ENCODE measurements at regions of chr2 and their contacts with region 1.

Region 1: DNA sequence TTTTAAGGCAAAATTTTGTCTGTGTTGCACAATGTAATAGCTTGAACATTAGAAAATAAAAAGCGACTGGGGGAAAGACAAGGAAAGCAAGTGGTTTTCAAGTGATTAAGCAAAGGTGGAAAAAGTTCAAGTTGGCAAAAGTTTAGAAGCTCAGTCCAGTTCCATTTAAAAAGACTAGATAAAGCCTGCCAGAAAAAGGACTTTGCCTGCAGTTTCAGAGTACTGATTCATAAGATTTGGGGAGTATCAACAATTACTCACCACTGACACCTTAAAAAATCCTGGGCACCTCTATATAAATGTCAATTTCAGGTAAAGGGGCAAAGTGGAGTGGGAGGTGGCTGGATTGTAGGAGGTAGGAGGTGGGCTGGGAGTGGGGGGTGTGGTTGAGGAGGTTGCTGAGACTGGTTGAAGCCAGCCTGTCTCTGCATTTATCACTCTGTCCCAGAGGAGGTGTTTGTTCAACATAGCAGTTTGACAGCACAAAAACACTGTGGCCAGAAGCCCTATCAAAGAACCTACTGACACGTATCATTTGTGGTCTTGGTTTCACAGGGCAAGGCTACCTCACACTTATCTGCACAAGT is 14.6 kb downstream of the ZEB2 start:
- DNase-seq: no peak

Region 2: DNA sequence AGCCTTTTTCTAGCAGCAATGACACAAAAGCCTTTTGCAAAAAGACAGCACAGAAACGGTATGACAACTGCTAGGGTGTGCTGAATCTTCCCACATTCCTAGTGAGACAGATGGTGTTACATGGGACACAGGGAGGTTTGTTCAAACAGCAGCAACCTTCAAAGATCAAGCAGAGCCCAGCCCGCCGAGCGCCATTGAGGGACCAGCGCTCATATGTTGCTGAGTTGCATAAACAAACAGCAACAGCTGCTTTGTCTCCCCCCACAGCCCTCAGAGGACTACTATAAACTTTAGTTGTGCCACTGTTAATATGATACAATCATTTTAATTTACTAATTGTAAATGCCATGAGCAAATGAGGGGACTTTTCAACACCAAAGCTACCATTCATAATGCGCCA is 103.1 kb before region 1 on chr2:
- intact Hi-C with region 1: loop called (anchors 5 kb)
- DNase-seq: no peak

Region 3: DNA sequence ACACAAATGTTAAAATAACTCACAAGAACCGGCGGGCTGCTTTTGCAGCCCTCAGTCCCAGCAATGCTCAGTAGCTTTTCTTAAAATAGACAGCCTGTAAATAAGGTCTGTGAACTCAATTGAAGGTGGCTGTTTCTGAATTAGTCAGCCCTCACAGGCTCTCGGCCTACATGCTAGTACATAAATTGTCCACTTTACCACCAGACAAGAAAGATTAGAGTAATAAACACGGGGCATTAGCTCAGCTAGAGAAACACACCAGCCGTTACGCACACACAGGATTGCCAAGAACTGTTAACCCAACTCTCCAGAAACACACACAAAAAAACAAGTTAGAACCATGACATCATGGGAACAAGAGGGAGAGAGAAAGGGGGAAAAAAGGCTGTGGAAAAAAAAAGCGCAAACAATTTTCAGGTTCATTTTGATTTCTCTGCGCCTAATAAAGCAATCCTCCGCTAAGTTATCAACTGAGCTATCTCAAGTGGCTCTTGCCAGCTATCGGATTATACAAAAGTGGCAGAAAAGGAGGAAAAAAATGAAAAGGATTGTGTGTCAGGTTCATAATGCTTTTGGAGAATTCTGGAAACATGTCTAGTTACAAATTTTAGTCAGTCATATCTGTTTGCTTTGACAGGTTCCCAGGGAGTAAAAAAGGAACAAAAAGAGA is 74.5 kb before region 1 on chr2:
- intact Hi-C with region 1: loop called (anchors 2 kb)
- DNase-seq: no peak

Region 4: GRCh38 chr2:144452169-144452988 is 53.0 kb before region 1 on chr2:
- intact Hi-C with region 1: loop called (anchors 2 kb)
- DNase-seq: no peak

Region 5: DNA sequence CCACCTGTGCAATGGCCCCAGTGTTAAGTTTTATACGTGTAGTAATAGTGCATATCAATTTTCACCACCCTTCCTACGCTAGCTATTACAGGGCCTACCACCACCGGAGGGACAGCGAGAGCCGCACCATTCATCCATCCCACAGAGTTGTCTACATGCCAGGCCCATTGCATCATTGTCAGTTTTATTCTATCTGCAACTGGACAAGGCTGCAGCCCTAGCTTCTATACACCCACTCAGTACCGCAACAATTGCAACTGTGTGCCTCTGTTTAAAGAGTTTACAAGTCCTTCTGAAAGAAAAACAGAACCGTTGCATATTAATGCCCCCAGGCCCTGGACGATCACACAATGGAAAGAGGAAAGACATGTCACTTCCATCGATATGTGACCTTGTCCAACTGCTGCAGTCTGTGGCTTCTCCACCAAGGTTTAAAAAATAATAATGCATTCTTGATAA is 44.0 kb before region 1 on chr2:
- intact Hi-C with region 1: loop called (anchors 5 kb)
- DNase-seq: no peak

Region 6: DNA sequence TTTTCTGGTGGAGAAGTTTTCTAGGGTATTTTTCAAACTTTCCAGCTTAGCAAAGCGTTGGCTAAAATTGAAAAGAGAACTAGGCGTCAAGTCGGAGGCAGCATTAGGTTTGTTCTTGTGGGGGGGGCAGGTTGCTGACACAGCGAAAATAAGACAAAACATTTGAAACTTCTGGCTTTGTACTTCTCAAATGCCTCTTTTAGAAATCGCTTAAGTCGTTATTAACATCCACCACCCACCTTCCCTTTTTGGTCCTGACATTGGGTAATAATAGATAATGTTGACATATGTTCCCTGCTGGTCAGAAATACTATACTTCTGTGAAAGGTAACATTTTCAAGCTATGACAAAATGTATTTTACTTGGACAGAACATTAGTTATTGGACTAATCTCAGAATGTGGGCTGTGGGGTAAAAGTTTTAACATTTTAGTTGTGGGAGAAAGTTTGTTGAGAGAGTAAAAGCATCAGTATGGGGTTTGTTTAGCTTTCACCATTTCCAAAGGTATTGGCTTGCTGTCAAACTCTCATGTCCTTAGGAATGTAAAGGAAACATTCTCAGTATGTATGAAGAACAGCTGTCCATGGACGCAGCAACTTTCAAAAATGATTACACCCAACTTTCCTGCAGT is 102.7 kb after region 1 on chr2:
- intact Hi-C with region 1: no loop called
- DNase-seq: no peak

Measured in cardiac septum (tissue), 1 donor.